ENCODE measurements at regions of chr3 and their contacts with region 1.

Region 1: GRCh38 chr3:189288348-189289235 is 116.8 kb downstream of the TPRG1 start:
- DNase-seq: no peak
- ATAC-seq: peak; percentile 73
- H3K4me3 Mint-ChIP-seq: peak overlapping the region; percentile 0
- H3K27ac Mint-ChIP-seq: peak overlapping the region; percentile 84
- H3K4me1 Mint-ChIP-seq: peaks cover 46% of the 10 kb centered on the region
- H3K27me3 Mint-ChIP-seq: no peaks in the 10 kb centered on the region

Region 2: GRCh38 chr3:189304446-189305351 is 16.1 kb after region 1 on chr3:
- CTCF ChIA-PET with region 1: interaction called, 4 read pairs
- POLR2A ChIA-PET with region 1: interaction called, 6 read pairs
- intact Hi-C with region 1: loop called (anchors 1 to 2 kb)
- DNase-seq: peak; percentile 58
- ATAC-seq: peak; percentile 47
- H3K4me3 Mint-ChIP-seq: peak overlapping the region; percentile 27
- H3K27ac Mint-ChIP-seq: peak overlapping the region; percentile 90
- H3K4me1 Mint-ChIP-seq: peaks cover 74% of the 10 kb centered on the region
- H3K27me3 Mint-ChIP-seq: no peaks in the 10 kb centered on the region

Measured in activated CD4-positive, alpha-beta T cell treated with anti-CD3 and anti-CD28 coated beads for 36 hours (primary cell).